Colonic mucosa (tissue), 4 donors: ENCODE measurements at regions of chr16 and their contacts with region 1.

Region 1: GRCh38 chr16:30984669-30985400 is at the start of gene HSD3B7:
- DNase-seq: peak; percentile 95
- H3K4me3 ChIP-seq: peak within 1 kb of the TSS; percentile 56
- H3K27ac ChIP-seq: peak within 1 kb of the TSS; percentile 53
- H3K4me1 ChIP-seq: no peaks in the 10 kb centered on the region
- H3K27me3 ChIP-seq: no peaks in the 10 kb centered on the region
- CTCF ChIP-seq: peak; percentile 89
- total RNA-seq, gene HSD3B7: 19.0 to 20.9 TPM

Region 2: DNA sequence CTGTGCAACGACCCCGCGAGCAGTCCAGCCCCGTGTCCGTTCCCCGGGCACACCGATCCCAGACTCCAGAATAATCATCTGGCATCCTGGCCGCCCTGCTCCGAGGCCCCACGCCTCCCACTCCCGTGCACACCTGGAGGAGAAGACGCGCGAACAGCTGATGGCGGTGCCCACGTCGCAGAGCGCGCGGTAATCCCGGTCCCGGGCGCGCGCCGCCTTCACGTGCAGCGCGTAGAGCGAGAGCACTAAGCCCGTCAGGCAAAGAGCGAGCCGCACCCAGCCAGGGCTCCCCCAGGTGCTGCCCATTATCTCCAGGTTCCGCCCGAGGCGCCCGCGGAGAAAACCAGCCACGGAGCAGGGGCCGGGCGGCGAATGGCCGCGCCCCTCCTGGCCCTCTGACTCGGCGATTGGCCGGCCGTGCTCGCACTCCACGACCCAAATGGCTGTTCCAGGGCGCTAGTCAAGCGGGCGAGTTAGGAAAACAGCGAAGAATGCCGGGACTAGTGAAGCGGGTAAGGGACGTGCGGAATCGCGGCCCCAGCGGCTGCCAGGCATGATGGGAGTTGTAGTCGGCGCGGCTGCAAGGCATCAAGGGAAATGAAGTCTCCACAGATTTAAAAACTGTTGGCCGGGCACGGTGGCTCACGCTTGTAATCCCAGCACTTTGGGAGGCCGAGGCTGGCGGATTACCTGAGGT is 109.7 kb after region 1 on chr16 and contains the start of gene VKORC1:
- intact Hi-C with region 1: loop called (anchors 2 kb)
- DNase-seq: peak; percentile 97
- H3K4me3 ChIP-seq: peak within 1 kb of the TSS; percentile 73
- H3K27ac ChIP-seq: peak within 1 kb of the TSS; percentile 85
- H3K4me1 ChIP-seq: peaks cover 8% of the 10 kb centered on the region
- H3K27me3 ChIP-seq: no peaks in the 10 kb centered on the region
- CTCF ChIP-seq: no peak
- total RNA-seq, gene VKORC1: 39.5 to 50.3 TPM

Region 3: GRCh38 chr16:31142109-31143010 is 157.5 kb after region 1 on chr16:
- intact Hi-C with region 1: loop called (anchors 10 kb)
- DNase-seq: peak; percentile 100
- H3K4me3 ChIP-seq: peak overlapping the region; percentile 40
- H3K27ac ChIP-seq: peak overlapping the region; percentile 91
- H3K4me1 ChIP-seq: peaks cover 23% of the 10 kb centered on the region
- H3K27me3 ChIP-seq: no peaks in the 10 kb centered on the region
- CTCF ChIP-seq: peak; percentile 90

Region 4: DNA sequence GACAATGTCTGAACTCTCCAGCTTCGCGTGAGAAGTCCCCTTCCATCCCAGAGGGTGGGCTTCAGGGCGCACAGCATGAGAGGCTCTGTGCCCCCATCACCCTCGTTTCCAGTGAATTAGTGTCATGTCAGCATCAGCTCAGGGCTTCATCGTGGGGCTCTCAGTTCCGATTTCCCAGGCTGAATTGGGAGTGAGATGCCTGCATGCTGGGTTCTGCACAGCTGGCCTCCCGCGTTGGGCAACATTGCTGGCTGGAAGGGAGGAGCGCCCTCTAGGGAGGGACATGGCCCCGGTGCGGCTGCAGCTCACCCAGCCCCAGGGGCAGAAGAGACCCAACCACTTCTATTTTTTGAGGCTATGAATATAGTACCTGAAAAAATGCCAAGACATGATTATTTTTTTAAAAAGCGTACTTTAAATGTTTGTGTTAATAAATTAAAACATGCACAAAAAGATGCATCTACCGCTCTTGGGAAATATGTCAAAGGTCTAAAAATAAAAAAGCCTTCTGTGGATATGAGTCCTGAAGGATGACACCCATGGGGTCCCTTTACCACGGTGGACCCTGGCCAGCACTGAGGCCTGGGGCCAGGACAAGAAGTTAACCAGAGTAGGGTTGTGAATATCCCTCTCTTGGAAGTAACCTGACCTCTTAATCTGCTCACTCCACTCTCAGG is 397.8 kb after region 1 on chr16:
- intact Hi-C with region 1: loop called (anchors 5 kb)
- DNase-seq: peak; percentile 59
- H3K4me3 ChIP-seq: no peak overlapping the region
- H3K27ac ChIP-seq: no peak overlapping the region
- H3K4me1 ChIP-seq: no peaks in the 10 kb centered on the region
- H3K27me3 ChIP-seq: no peaks in the 10 kb centered on the region
- CTCF ChIP-seq: peak; percentile 45

Region 5: DNA sequence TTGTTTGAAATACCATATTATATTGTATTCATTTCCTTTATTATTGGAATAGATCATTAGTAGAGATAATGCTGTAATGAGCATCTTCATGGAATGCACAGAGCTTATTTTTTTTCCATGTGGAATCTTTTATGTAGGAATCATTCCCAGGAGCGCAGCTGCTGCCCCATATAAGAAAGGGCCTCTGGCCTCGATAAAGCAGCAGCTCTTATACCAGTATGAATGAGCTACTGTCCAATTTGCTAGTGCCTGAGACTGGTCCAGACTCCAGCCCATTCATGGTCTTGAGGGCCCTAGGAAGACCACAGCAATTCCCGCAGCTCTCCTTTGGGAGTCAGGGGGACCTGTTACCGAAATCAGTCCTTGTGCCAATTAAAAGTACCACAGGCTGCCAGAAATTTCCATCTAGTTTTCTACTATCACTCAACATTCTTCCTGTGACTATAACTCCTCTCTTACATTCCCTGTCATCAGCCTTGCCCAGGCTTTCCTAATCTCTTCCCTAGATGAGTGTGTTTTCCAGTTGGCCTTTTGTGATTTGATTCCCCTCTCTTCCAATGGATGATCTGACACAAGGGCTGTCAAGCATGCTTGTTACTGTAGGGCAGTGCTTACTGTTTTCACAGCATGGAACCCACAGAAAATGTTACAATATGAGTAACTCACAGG is 455.8 kb after region 1 on chr16:
- intact Hi-C with region 1: loop called (anchors 5 kb)
- DNase-seq: no peak
- H3K4me3 ChIP-seq: no peak overlapping the region
- H3K27ac ChIP-seq: no peak overlapping the region
- H3K4me1 ChIP-seq: no peaks in the 10 kb centered on the region
- H3K27me3 ChIP-seq: no peaks in the 10 kb centered on the region
- CTCF ChIP-seq: no peak

Region 6: GRCh38 chr16:31868691-31869167 is 883.9 kb after region 1 on chr16:
- intact Hi-C with region 1: loop called (anchors 5 kb)
- DNase-seq: peak; percentile 88
- H3K4me3 ChIP-seq: no peak overlapping the region
- H3K27ac ChIP-seq: peak overlapping the region; percentile 1
- H3K4me1 ChIP-seq: no peaks in the 10 kb centered on the region
- H3K27me3 ChIP-seq: no peaks in the 10 kb centered on the region
- CTCF ChIP-seq: peak; percentile 80